Ovary (tissue), 10 donors: ENCODE measurements at regions of chr2 and their contacts with region 1.

Region 1: DNA sequence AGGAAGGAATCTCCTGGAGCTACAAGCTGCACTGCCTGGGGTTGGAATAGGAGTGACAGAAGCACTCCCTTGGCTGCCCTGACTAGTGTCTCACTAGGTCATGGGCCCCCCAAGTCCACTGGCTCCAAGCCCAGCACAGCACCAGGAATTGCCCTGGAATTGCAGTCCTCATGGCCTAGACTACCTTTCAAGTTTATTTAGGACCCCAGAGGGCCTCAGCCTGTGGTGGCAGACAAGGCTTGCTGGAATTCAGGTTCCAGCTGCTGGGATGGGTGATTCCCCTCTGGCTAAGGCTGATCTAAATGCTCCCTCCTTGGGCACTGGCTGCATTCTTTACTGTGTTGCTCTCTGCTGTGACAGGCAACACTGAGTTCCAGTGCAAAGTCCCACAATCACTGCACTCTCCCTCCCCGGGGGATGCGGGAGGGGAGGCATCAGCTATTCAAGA is 14.0 kb downstream of the STRADB start:
- DNase-seq: peak in 1 of 5 donors; percentile 13
- H3K4me3 ChIP-seq: no peak overlapping the region
- H3K27ac ChIP-seq: no peak overlapping the region
- H3K4me1 ChIP-seq: no peaks in the 10 kb centered on the region
- H3K27me3 ChIP-seq: no peaks in the 10 kb centered on the region
- CTCF ChIP-seq: no peak
- EP300 ChIP-seq: no peak
- POLR2A ChIP-seq: no peak

Region 2: GRCh38 chr2:201383156-201383555 is 82.4 kb before region 1 on chr2:
- intact Hi-C with region 1: loop called in 1 of 4 experiments (anchors 2 kb)
- DNase-seq: no peak
- H3K4me3 ChIP-seq: no peak overlapping the region
- H3K27ac ChIP-seq: no peak overlapping the region
- H3K4me1 ChIP-seq: no peaks in the 10 kb centered on the region
- H3K27me3 ChIP-seq: no peaks in the 10 kb centered on the region
- CTCF ChIP-seq: no peak
- EP300 ChIP-seq: no peak
- POLR2A ChIP-seq: no peak